Activated T-helper 1 cell treated with anti-CD3 and anti-CD28 coated beads, Interleukin-12 subunit alpha, Interleukin-12 subunit beta, Interleukin-2, Interleukin-4 antibody, amounts not matched to agents 30 ng/mL and 10 ng/mL and 1 ng/mL, durations not matched to agents 14 hours and 24 hours and 36 hours (primary cell): ENCODE measurements at regions of chr16 and their contacts with region 1.

Region 1: DNA sequence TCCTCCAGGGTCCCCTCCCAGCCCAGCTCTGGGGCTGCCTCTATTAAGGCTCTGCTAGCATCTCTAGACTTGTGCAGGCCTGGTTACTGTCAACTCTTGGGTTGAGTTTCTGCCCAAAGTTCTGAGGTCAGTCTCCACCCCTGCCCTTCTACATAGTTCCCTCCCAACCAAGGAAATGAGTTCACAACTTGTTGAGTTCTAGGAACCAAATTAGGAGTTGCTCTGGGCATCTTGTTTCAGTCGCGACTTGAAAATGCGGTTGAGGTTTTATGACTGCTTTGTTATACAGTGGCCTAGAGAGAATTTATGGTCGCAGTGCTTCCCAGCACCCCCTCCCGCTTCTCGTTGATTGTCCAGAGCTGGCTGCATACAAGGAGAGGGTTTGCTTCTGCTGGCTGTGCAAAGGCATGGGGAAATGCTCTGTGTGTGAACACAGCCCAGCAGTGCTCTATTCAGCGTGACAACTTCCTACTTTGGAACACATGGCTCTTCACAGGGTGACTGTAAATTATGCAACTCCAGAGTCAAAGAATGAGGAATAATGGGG is 20.2 kb downstream of the GNAO1 start:
- DNase-seq: no peak
- H3K4me3 Mint-ChIP-seq: no peak overlapping the region
- H3K27ac Mint-ChIP-seq: no peak overlapping the region
- H3K4me1 Mint-ChIP-seq: no peaks in the 10 kb centered on the region
- H3K27me3 Mint-ChIP-seq: peaks cover 50% of the 10 kb centered on the region

Region 2: DNA sequence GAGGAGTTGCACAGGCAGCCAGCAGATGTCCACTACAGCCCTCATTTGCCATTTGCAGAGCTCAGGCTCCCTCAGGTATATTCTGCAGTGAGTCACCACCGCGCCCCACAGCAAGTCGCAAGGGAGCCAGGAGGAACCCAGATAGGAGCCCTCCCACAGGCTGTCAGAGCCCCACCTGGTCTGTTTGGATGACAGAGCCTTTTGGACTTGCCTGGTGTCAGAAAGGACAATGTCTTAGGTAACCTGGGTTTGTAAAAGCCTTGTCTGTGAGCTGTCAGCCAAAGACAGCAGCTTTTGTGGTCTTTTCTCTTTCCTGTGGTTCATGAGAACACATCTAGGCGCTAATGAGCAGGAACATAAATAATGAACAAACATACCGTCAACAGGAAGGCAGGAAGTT is 50.6 kb after region 1 on chr16:
- intact Hi-C with region 1: loop called (anchors 1 kb)
- DNase-seq: peak; percentile 25
- H3K4me3 Mint-ChIP-seq: peak overlapping the region; percentile 24
- H3K27ac Mint-ChIP-seq: no peak overlapping the region
- H3K4me1 Mint-ChIP-seq: peaks cover 26% of the 10 kb centered on the region
- H3K27me3 Mint-ChIP-seq: peaks cover 22% of the 10 kb centered on the region